Posterior cingulate gyrus (tissue), 11 donors: ENCODE measurements at regions of chr18 and their contacts with region 1.

Region 1: GRCh38 chr18:58105888-58106260 is 61.8 kb downstream of the NEDD4L start:
- DNase-seq: peak in 1 of 10 donors; percentile 21

Region 2: DNA sequence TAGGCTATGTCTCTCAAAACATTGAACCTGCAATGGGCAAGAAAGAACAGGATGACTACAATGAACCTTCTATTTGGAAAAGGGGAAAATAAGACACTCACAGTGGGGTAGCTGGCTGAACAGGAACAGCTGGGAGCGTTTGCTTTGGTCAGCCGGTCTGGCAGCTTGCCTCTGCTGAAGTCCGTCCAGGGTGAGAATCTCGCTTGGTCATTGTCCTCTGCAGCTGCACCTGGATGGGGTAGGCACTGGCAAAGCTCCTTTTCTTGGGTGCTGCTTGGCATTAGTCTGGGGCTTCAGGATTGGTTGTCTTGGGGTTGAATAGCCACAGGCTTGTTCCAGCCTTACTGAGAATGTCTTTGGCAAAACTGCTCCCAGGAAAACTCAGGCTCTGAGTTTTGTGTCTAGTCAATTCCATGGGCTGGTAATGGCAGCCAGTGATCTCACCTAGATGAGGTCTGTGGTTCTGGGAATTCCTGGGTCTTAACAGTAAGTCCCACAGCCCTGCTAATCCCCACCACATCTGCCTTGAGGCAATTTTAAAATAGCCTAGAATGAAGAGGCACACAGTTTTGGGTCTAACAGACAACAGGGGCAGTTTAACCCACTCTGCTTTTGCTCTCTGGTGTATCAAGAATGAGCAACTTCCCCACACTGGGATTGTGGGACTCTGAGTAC is 48.4 kb before region 1 on chr18:
- intact Hi-C with region 1: loop called (anchors 5 kb)
- DNase-seq: peak in 5 of 10 donors; percentile 34 to 84 (median 39)